Activated T-helper 1 cell treated with anti-CD3 and anti-CD28 coated beads, Interleukin-12 subunit alpha, Interleukin-12 subunit beta, Interleukin-2, Interleukin-4 antibody, amounts not matched to agents 30 ng/mL and 10 ng/mL and 1 ng/mL, durations not matched to agents 14 hours and 24 hours and 36 hours (primary cell): ENCODE measurements at regions of chr19 and their contacts with region 1.

Region 1: GRCh38 chr19:42301656-42302203 is at the start of gene PRR19:
- DNase-seq: no peak
- H3K4me3 Mint-ChIP-seq: peak within 1 kb of the TSS; percentile 88
- H3K27ac Mint-ChIP-seq: peak within 1 kb of the TSS; percentile 89
- H3K4me1 Mint-ChIP-seq: peaks cover 14% of the 10 kb centered on the region
- H3K27me3 Mint-ChIP-seq: peaks cover 2% of the 10 kb centered on the region
- total RNA-seq, gene PRR19: 1.0 and 1.4 TPM in 2 replicates

Region 2: DNA sequence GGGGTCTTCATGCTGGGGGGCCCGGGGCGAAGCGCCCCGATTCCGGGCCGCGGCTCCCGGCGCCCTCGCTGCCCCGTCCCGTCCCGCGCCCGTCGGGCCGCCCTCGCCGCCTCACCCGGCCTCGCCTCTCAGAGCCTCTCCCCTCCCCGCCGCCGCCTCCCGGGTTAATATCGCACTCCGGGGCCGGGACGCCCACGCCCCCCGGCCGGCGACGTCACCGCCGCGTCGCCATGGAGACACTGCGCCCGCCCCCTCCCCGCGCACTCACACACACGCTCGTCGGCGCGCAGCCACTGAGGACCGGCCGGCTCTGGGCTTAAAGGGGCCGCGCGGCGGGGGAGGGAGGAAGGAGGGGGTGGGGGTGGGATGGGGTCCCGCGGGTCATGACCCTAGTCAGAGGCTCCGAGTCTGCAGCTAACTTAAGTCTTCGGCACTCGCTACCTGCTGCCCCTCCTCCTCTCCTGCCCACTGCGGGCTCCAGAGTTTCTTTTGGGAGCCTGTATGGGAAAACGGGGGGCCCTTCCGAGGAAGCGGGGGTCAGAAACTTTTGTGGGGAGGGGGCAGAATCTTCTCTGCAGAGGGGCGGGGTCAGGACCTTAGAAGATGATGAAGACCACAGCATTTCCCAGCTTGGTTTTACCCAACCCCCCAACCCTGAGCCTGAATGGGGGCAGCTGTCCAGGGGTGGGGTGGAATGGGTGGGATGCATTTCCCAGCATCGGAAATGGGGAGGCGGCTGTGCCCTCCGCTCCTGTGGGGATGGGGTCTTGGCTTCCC is 46.6 kb before region 1 on chr19 and contains the start of gene ERF:
- intact Hi-C with region 1: loop called (anchors 1 kb)
- DNase-seq: peak; percentile 92
- H3K4me3 Mint-ChIP-seq: peak within 1 kb of the TSS; percentile 74
- H3K27ac Mint-ChIP-seq: peak within 1 kb of the TSS; percentile 65
- H3K4me1 Mint-ChIP-seq: peaks cover 19% of the 10 kb centered on the region
- H3K27me3 Mint-ChIP-seq: peaks cover 9% of the 10 kb centered on the region
- total RNA-seq, gene ERF: 71.9 and 78.4 TPM in 2 replicates

Region 3: DNA sequence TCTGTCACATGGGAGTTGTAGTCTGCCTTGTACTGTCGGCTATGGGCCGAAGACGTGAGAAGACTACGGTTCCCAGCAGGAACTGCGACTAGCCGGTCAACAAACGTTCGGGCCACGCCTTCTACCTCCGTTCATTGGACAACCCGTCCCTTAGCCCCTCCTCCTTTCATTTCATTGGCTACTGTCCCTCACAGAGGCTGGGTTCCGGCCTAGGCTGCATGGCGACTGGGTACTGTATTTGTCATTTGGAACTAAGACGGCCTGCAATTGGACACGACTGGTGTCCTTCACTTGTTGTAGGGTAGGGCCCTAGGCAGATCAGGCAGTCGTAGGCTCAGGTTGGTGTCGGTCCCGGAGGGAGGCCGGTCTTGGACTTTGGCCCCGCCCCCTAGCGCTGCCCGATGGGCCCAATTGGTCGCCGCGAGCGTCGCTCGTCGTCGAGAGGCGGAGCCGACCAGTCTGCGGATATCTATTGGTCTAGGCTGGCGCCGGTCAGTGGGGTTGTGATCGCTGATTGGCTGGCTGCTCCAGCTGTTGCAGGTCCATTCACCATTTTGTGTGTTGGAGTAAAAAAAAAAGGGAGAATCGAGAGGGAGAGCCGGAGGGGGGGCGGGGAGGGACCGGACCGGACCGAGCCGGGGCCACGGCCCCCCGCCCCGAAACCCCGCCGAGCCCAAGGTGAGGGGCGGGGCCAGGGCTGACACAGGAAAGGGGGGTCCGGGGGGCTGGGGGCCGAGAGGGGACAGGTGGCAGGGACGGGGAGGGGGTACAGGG is 32.8 kb before region 1 on chr19 and contains the start of gene CIC:
- intact Hi-C with region 1: loop called (anchors 1 kb)
- DNase-seq: peak; percentile 99
- H3K4me3 Mint-ChIP-seq: no peak within 1 kb of the TSS
- H3K27ac Mint-ChIP-seq: peak within 1 kb of the TSS; percentile 99
- H3K4me1 Mint-ChIP-seq: peaks cover 30% of the 10 kb centered on the region
- H3K27me3 Mint-ChIP-seq: no peaks in the 10 kb centered on the region
- total RNA-seq, gene CIC: 66.9 and 68.0 TPM in 2 replicates

Region 4: DNA sequence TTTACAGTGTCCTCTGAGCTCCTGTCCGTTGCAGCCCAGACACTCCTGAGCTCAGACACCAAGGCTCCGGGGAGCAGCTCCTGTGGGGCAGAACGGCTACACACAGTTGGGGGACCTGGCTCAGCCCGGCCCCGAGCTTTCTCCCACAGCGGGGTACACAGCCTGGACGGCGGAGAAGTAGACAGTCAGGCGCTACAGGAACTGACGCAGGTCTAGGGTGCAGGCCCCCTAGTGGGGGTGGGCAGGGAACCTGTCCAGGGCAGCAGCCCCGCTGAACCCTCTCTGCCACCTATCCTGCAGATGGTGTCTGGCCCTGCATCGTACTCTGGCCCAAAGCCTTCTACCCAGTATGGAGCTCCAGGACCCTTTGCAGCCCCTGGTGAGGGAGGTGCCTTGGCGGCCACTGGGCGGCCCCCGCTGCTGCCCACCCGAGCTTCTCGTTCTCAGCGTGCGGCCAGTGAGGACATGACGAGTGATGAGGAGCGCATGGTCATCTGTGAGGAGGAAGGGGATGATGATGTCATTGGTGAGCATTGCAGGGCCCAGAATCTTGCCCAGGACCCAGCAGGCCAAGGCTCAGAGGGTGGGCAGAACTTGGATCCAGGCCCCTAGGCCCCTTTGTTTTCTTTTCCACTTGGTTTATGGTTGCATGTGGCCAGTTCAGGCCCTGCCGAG is 12.7 kb before region 1 on chr19:
- intact Hi-C with region 1: no loop called
- DNase-seq: no peak
- H3K4me3 Mint-ChIP-seq: no peak overlapping the region
- H3K27ac Mint-ChIP-seq: no peak overlapping the region
- H3K4me1 Mint-ChIP-seq: peaks cover 18% of the 10 kb centered on the region
- H3K27me3 Mint-ChIP-seq: no peaks in the 10 kb centered on the region

Region 5: DNA sequence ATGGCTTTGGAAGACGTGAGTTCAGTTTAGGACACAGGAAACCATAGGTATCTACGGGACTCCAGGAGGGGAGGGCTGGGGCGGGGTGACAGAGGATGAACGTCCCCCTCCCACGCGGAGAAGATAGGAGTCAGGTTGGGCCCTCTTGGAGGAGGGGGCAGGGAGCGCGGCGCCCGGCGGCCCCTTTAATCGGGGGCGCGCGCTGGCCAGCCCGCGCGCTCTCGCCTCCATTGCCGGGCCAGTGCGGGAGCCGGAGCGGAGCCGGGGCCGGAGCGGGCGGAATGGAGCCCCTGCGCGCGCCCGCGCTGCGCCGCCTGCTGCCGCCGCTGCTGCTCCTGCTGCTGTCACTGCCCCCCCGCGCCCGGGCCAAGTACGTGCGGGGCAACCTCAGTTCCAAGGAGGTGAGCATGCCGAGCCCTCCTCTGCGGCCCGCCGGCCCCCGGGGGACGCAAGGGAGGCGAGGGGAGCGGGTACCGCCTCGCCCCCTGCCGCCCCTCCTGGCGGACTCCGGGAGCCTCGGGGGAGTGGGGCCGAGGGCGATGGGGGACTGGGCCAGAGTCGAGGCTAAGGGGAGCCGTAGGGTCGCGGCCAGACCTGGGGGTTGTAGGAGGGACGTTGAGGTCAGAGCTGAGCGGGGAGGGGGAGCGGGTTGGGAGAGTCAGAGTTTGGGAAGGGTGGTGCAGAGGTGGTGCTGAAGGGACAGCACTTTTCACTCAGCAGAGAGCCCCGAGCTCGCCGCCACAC is 11.5 kb after region 1 on chr19 and contains the start of gene TMEM145:
- intact Hi-C with region 1: loop called (anchors 1 kb)
- DNase-seq: peak; percentile 35
- H3K4me3 Mint-ChIP-seq: peak within 1 kb of the TSS; percentile 79
- H3K27ac Mint-ChIP-seq: no peak within 1 kb of the TSS
- H3K4me1 Mint-ChIP-seq: peaks cover 7% of the 10 kb centered on the region
- H3K27me3 Mint-ChIP-seq: peaks cover 44% of the 10 kb centered on the region
- total RNA-seq, gene TMEM145: 0.56 and 2.1 TPM in 2 replicates

Region 6: DNA sequence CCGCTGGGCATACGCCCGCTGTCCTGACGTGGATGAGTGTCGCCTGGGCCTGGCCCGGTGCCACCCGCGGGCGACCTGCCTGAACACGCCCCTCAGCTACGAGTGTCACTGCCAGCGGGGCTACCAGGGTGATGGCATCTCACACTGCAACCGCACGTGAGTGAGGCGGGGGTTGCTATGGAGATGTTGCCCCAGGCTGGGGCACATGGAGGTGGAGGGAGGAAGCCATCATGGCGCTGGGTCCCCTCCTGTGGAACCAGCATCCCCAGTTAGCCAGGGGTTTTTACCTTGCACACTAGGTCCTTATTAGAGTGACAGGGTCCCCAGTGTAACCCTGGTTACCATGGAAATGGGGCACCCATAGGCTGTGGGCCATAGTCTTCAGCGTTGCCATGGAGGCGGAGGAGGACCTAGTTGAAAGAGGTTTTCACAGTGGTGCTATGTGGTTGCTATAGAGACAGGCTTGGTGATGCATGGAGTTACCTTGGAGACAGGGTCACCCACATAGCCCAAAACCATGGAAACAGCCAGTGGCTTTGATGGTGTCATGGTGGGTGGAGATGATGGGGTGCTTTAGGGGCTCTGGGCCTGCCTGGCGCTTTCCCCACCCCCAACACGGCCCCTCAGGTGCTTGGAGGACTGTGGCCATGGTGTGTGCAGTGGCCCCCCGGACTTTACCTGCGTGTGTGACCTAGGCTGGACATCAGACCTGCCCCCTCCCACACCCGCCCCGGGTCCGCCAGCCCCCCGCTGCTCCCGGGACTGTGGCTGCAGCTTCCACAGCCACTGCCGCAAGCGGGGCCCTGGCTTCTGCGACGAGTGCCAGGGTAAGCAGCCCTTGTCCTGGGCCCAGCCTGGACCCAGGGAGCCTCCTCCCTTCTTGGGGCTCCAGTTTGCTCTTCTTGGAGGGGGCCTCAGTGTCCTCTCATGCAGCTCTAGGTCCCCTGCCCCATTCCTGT is 50.9 kb after region 1 on chr19:
- intact Hi-C with region 1: no loop called
- DNase-seq: no peak
- H3K4me3 Mint-ChIP-seq: no peak overlapping the region
- H3K27ac Mint-ChIP-seq: no peak overlapping the region
- H3K4me1 Mint-ChIP-seq: no peaks in the 10 kb centered on the region
- H3K27me3 Mint-ChIP-seq: no peaks in the 10 kb centered on the region

Region 7: DNA sequence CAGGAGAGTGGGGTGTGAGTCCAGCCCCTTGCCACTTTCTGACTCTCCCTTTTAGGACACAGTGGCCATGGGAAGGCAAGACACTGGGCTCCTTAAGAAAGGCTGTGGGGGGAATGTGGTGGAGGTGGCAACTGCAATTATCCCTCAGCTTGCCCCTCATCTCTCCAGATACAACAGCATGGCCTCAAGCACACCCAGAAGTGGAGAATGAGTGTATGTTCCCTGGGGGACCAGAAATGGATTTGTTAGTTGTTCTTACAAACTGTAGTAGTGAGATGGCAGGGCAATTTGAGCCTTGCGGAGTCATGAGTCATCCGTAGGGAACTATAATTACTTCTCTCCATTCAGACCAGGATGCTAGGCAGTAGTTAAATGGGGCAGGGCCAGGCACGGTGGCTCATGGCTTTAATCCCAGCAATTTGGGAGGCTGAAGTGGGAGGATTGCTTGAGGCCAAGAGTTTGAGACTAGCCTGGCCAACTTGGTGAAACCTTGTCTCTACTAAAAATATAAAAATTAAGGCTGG is 166.6 kb after region 1 on chr19:
- intact Hi-C with region 1: no loop called
- DNase-seq: no peak
- H3K4me3 Mint-ChIP-seq: no peak overlapping the region
- H3K27ac Mint-ChIP-seq: no peak overlapping the region
- H3K4me1 Mint-ChIP-seq: peaks cover 27% of the 10 kb centered on the region
- H3K27me3 Mint-ChIP-seq: peaks cover 3% of the 10 kb centered on the region